ENCODE measurements at regions of chr13 and their contacts with region 1.

Region 1: DNA sequence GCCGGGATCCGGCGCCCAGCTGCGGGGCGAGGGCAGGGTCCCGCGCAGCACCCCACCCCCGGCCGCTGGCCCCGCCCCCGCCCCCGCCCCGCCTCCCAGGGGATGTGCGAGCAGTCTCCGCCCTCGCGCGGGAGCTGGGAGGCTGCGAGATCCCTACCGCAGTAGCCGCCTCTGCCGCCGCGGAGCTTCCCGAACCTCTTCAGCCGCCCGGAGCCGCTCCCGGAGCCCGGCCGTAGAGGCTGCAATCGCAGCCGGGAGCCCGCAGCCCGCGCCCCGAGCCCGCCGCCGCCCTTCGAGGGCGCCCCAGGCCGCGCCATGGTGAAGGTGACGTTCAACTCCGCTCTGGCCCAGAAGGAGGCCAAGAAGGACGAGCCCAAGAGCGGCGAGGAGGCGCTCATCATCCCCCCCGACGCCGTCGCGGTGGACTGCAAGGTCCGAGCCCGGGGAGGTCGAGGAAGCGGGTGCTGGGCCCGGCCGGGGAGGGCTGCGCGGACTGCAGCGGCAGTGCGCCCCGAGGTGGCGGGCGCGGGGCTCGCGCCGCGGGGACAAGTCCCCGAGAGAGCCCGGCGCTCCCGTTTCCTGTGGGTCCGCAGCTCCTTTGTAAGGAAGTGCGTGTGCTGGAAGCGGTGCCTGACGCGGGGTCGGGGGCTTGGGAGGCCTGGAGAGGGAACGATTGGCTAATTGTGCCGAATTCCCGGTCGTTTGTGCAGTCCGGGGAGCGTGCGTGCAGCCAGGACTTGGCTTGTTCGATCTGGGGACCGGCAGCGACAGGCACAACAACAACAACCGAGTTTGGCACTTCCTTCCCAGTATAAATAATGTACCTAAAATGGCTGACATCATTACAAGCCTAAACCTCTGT is at the start of gene ITM2B:
- DNase-seq: peak; percentile 68 to 97 (median 80)

Region 2: DNA sequence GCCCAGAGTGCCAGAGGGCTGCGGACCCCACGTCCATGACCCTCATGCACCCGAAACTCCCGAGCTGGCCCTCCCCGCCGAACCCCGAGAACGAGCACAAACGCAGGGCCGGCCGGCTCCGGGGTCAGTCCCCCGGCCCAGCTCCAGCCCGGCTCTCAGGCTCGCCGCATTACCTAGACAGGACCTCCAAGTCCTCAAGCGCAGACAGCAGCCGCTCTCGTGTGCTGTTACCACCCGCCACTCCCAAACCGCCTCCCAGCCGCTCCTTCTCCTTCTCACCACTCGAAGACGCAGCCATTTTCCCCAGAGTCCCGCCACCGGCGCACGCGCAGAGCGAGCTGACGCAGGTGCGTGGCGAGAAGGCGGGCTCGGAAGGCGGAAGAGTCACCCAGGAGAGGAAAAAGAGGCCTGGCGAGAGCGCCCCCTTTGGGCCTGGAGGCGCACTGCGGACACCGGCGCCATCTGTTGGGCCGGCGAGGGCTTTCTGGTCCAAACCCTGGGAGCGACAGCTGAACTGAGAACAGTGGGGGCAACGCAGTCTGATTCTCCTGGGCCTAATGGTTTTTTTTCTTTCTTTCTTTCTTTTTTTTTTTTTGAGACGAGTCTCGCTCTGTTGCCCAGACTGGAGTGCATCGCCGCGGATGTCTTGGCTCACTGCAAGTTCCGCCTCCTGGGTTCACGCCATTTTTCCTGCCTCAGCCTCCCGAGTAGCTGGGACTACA is 138.3 kb before region 1 on chr13 and contains the start of gene MED4:
- intact Hi-C with region 1: loop called (anchors 10 kb)
- DNase-seq: peak; percentile 91 to 99 (median 96)

Region 3: GRCh38 chr13:48126944-48127830 is 106.1 kb before region 1 on chr13:
- intact Hi-C with region 1: loop called (anchors 2 kb)
- DNase-seq: peak in 4 of 10 donors; percentile 5 to 23 (median 12)

Region 4: DNA sequence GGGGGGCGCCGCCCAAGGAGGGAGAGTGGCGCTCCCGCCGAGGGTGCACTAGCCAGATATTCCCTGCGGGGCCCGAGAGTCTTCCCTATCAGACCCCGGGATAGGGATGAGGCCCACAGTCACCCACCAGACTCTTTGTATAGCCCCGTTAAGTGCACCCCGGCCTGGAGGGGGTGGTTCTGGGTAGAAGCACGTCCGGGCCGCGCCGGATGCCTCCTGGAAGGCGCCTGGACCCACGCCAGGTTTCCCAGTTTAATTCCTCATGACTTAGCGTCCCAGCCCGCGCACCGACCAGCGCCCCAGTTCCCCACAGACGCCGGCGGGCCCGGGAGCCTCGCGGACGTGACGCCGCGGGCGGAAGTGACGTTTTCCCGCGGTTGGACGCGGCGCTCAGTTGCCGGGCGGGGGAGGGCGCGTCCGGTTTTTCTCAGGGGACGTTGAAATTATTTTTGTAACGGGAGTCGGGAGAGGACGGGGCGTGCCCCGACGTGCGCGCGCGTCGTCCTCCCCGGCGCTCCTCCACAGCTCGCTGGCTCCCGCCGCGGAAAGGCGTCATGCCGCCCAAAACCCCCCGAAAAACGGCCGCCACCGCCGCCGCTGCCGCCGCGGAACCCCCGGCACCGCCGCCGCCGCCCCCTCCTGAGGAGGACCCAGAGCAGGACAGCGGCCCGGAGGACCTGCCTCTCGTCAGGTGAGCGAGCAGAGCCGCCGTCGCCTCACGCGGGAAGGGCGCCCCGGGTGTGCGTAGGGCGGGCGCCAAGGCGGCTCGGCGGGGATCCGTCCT is 70.3 kb after region 1 on chr13 and contains the start of gene RB1:
- intact Hi-C with region 1: loop called (anchors 2 kb)
- DNase-seq: peak; percentile 78 to 98 (median 85)

Region 5: DNA sequence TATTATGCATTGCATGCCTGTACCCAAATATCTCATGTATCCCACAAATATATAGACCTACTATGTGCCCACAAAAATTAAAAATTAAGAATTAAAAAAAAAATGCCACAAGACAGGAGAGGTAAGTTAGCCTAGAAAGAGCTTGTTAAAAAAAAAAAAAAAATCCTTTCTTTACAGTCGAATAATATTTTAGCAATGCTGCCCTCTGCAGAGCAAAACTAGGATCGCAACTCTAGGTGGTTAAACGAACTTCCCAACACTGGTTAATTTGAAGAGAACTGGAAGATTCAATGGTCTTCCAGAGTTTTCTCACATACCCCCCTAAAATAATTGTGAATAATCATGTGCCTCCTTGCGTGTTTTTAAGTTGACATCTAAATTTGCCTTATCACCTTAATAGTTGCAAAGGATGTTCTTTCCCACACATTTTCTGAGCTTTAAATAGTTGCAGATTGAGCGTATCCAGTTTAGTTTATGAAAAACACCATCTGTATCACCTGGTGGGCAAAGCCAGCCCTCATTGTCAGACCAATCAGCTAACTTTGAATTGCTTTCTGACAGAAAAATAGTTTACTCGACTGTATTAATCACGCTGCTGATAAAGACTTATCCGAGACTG is 347.0 kb after region 1 on chr13:
- intact Hi-C with region 1: loop called (anchors 10 kb)
- DNase-seq: peak in 5 of 10 donors; percentile 34 to 78 (median 63)

Measured in posterior cingulate gyrus (tissue), 11 donors.